ENCODE measurements at regions of chr17 and their contacts with region 1.

Region 1: GRCh38 chr17:17398188-17398942 is 78.4 kb upstream of the MED9 start:
- DNase-seq: no peak
- H3K4me3 ChIP-seq: no peak overlapping the region
- H3K27ac ChIP-seq: no peak overlapping the region
- H3K4me1 ChIP-seq: no peaks in the 10 kb centered on the region
- H3K27me3 ChIP-seq: no peaks in the 10 kb centered on the region
- CTCF ChIP-seq: no peak
- EP300 ChIP-seq: no peak
- POLR2A ChIP-seq: no peak

Region 2: GRCh38 chr17:17366941-17367875 is 31.2 kb before region 1 on chr17:
- intact Hi-C with region 1: loop called in 1 of 4 experiments (anchors 2 kb)
- DNase-seq: no peak
- H3K4me3 ChIP-seq: no peak overlapping the region
- H3K27ac ChIP-seq: no peak overlapping the region
- H3K4me1 ChIP-seq: no peaks in the 10 kb centered on the region
- H3K27me3 ChIP-seq: no peaks in the 10 kb centered on the region
- CTCF ChIP-seq: no peak
- EP300 ChIP-seq: no peak
- POLR2A ChIP-seq: no peak

Region 3: GRCh38 chr17:17484451-17484899 is 86.1 kb after region 1 on chr17:
- intact Hi-C with region 1: no loop called
- DNase-seq: no peak
- H3K4me3 ChIP-seq: no peak overlapping the region
- H3K27ac ChIP-seq: no peak overlapping the region
- H3K4me1 ChIP-seq: no peaks in the 10 kb centered on the region
- H3K27me3 ChIP-seq: no peaks in the 10 kb centered on the region
- CTCF ChIP-seq: no peak
- EP300 ChIP-seq: no peak
- POLR2A ChIP-seq: no peak

Measured in ovary (tissue), 10 donors.